A549 (cell line): ENCODE measurements at regions of chr9 and their contacts with region 1.

Region 1: GRCh38 chr9:20941174-20941690 is 90.2 kb downstream of the HACD4 start:
- DNase-seq: peak; percentile 48 to 71
- ATAC-seq: peak; percentile 100
- H3K4me3 ChIP-seq: no peak overlapping the region
- H3K27ac ChIP-seq: no peak overlapping the region
- H3K4me1 ChIP-seq: no peaks in the 10 kb centered on the region
- CTCF ChIP-seq: peak; percentile 95
- EP300 ChIP-seq: no peak
- POLR2A ChIP-seq: no peak
- RAD21 ChIP-seq: peak; percentile 94 to 95

Region 2: GRCh38 chr9:20356403-20357035 is 584.7 kb before region 1 on chr9:
- CTCF ChIA-PET with region 1: interaction called, 55 read pairs
- POLR2A ChIA-PET with region 1: no interaction called
- DNase-seq: peak; percentile 66 to 83
- ATAC-seq: peak; percentile 94 to 95
- H3K4me3 ChIP-seq: peak overlapping the region; percentile 18; the same call in 1 of the 3 replicates
- H3K27ac ChIP-seq: peak overlapping the region; percentile 46 to 60; a peak in 4 of 6 replicates
- H3K4me1 ChIP-seq: peaks cover 40% of the 10 kb centered on the region
- CTCF ChIP-seq: peak; percentile 94
- EP300 ChIP-seq: no peak
- POLR2A ChIP-seq: no peak
- RAD21 ChIP-seq: peak; percentile 95 to 96

Region 3: GRCh38 chr9:20929276-20929675 is 12.0 kb before region 1 on chr9:
- CTCF ChIA-PET with region 1: interaction called, 13 read pairs
- POLR2A ChIA-PET with region 1: no interaction called
- DNase-seq: no peak
- ATAC-seq: no peak
- H3K4me3 ChIP-seq: no peak overlapping the region
- H3K27ac ChIP-seq: no peak overlapping the region
- H3K4me1 ChIP-seq: no peaks in the 10 kb centered on the region
- CTCF ChIP-seq: no peak
- EP300 ChIP-seq: no peak
- POLR2A ChIP-seq: no peak
- RAD21 ChIP-seq: no peak

Region 4: DNA sequence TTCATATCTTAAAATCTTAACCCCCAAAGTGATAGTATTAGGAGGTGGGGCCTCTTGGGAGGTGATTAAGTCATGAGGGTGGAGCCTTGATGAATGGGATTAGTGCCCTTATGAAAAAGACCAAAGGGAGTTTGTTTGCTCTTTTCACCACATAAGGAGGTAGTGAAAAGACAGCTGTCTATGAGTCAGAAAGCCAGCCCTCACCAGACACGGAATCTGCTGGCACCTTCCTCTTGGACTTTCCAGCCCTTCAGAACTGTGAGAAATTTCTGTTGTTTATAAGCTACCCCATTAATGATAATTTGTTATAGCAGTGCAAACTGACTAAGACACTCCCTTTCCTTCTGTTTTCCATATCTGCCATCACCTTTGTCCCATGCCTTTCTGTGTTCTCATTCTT is 115.7 kb after region 1 on chr9:
- CTCF ChIA-PET with region 1: no interaction called
- POLR2A ChIA-PET with region 1: no interaction called
- DNase-seq: peak in 1 of 2 experiments; percentile 16
- ATAC-seq: peak in 1 of 2 experiments; percentile 51; a peak in 3 of 6 replicates
- H3K4me3 ChIP-seq: no peak overlapping the region
- H3K27ac ChIP-seq: no peak overlapping the region
- H3K4me1 ChIP-seq: no peaks in the 10 kb centered on the region
- CTCF ChIP-seq: no peak
- EP300 ChIP-seq: no peak
- POLR2A ChIP-seq: no peak
- RAD21 ChIP-seq: no peak

Region 5: DNA sequence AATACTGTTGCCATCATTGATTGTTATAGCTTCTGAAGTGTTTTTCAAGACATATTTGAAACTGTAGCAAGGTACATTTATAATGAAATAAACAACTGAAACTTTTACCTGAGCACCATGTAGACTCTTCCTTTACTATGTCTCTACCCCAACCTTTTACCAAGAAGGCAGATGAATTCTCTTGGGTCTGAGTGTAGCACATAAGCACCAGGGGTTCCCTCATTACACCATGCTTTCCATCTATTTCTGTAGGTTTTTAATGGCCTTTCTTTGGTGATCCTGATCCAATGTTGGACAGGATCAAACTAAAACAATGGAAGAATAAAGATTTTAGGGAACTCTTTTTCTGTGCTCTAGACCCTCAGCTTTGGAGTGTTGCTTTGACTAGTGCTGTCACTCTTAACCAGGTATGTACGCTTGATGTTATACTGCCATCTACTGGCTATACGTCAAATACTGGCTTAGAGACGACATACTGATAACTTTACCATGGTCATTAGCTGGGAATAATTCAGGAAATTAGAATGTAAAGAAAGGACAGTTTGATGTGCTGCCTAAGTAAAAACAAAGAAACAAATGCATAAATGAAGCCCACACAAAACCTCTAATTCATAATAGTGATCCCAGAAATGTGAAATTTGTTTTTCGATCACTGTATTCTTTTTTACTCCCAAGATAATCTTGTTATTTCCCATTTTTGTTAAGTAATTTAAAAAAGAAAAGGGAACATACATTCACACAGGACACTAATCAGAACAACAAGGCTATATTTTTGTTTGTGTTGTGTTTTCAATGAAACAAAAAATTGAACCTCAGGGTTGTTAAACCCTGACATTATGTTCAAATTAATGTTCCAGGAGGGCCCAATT is 169.7 kb after region 1 on chr9:
- CTCF ChIA-PET with region 1: interaction called, 29 read pairs
- POLR2A ChIA-PET with region 1: no interaction called
- DNase-seq: peak; percentile 40 to 77
- ATAC-seq: peak; percentile 97 to 99
- H3K4me3 ChIP-seq: no peak overlapping the region
- H3K27ac ChIP-seq: no peak overlapping the region
- H3K4me1 ChIP-seq: no peaks in the 10 kb centered on the region
- CTCF ChIP-seq: peak; percentile 92
- EP300 ChIP-seq: no peak
- POLR2A ChIP-seq: no peak
- RAD21 ChIP-seq: peak; percentile 91 to 95

Region 6: GRCh38 chr9:21255538-21256253 is 314.5 kb after region 1 on chr9:
- CTCF ChIA-PET with region 1: no interaction called
- POLR2A ChIA-PET with region 1: no interaction called
- DNase-seq: no peak
- ATAC-seq: no peak
- H3K4me3 ChIP-seq: no peak overlapping the region
- H3K27ac ChIP-seq: no peak overlapping the region
- H3K4me1 ChIP-seq: no peaks in the 10 kb centered on the region
- CTCF ChIP-seq: no peak
- EP300 ChIP-seq: no peak
- POLR2A ChIP-seq: no peak
- RAD21 ChIP-seq: no peak